Adrenal gland (tissue), 19 donors: ENCODE measurements at regions of chr1 and their contacts with region 1.

Region 1: DNA sequence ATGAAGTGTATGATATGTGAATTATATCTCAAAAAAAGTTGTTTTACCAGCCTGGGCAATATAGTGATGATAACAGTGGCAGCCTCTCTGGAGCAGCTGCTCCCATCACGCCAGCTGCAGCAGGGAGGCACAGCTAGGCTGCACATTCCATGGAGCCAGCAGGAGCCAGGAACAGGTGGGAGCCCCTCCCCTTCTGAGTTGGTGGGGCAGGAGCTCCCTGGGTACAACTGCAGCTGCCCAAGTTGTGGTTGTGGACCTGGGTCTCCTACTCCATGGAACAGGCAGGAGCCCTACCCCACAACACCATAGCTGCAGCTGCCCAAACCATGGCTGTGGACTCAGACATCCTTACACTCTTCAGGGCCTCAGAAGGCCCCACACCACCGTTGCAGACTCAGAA is 21.7 kb upstream of the FNBP1L start:
- DNase-seq: no peak
- H3K4me3 ChIP-seq: no peak overlapping the region
- H3K27ac ChIP-seq: no peak overlapping the region
- H3K4me1 ChIP-seq: no peaks in the 10 kb centered on the region
- H3K27me3 ChIP-seq: no peaks in the 10 kb centered on the region
- CTCF ChIP-seq: no peak
- POLR2A ChIP-seq: no peak

Region 2: GRCh38 chr1:93304716-93305138 is 121.5 kb before region 1 on chr1:
- intact Hi-C with region 1: loop called (anchors 10 kb)
- DNase-seq: peak; percentile 36 to 73 (median 55)
- H3K4me3 ChIP-seq: no peak overlapping the region
- H3K27ac ChIP-seq: no peak overlapping the region
- H3K4me1 ChIP-seq: no peaks in the 10 kb centered on the region
- H3K27me3 ChIP-seq: no peaks in the 10 kb centered on the region
- CTCF ChIP-seq: peak; percentile 76 to 94 (median 84)
- POLR2A ChIP-seq: no peak